CD14-positive monocyte (primary cell): ENCODE measurements at regions of chr18 and their contacts with region 1.

Region 1: DNA sequence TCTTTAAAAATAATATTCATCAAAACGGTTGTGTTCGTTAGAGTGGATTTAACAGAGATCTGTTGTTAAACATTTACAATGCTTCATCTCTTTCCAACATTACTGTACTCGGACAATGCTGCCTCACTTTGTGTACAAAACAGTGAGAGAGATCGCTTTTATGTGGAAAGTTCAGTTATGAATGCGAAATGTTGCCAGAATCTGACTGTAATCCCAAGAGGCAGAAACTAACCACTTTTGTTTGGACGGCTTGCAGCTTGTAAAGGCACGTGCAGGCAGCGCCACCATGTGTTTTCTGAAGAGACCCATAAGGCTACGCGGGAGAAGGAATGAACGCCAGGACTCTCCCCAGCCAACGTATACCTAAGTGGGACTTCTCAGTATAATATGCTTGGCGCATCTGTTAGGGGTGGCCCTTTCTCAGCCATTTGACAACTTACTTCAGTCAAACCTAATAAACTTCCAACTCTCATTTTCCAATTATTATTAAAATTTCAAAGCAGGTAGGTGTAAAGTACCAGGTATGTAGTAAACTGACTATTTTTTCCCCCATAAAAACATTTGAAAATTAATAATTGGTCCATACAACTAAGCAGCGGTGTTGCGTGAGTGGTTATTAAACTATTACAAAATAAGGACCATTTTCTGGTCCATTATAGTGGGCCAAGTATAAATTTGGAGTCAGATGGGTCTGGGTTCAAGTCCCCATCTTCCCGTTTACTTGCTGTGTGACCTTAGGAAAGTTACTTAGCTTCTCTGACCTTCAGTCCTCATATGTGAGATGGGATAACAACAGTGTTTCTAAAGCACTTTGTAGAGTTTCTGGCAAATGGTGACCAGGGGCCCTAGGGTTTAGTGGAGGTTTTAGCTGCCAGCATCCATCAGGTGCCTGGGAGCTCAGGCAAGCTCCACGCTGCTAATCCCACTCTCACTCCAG is 5.6 kb upstream of the NAPG start:
- DNase-seq: peak; percentile 70 to 81 (median 78)
- H3K4me3 ChIP-seq: no peak overlapping the region
- H3K4me3 Mint-ChIP-seq: no peak overlapping the region
- H3K27ac ChIP-seq: no peak overlapping the region
- H3K27ac Mint-ChIP-seq: peak overlapping the region in 6 of 7 donors; percentile 19 to 92 (median 46)
- H3K4me1 ChIP-seq: peaks cover 37 to 40% of the 10 kb centered on the region in 2 donors
- H3K4me1 Mint-ChIP-seq: peaks cover 42% of the 10 kb centered on the region
- H3K27me3 ChIP-seq: no peaks in the 10 kb centered on the region
- H3K27me3 Mint-ChIP-seq: peaks cover 0 to 2% (median 0%) of the 10 kb centered on the region in 3 donors
- CTCF ChIP-seq: peak; percentile 83

Region 2: GRCh38 chr18:9971313-9971920 is 548.9 kb before region 1 on chr18:
- intact Hi-C with region 1: loop called (anchors 2 to 5 kb)
- DNase-seq: peak; percentile 74 to 85 (median 75)
- H3K4me3 ChIP-seq: no peak overlapping the region
- H3K4me3 Mint-ChIP-seq: no peak overlapping the region
- H3K27ac ChIP-seq: no peak overlapping the region
- H3K27ac Mint-ChIP-seq: no peak overlapping the region
- H3K4me1 ChIP-seq: peaks cover 26 to 38% of the 10 kb centered on the region in 2 donors
- H3K4me1 Mint-ChIP-seq: peaks cover 45% of the 10 kb centered on the region
- H3K27me3 ChIP-seq: no peaks in the 10 kb centered on the region
- H3K27me3 Mint-ChIP-seq: peaks cover 10 to 16% (median 11%) of the 10 kb centered on the region in 3 donors
- CTCF ChIP-seq: peak; percentile 87

Region 3: GRCh38 chr18:10405816-10406663 is 114.2 kb before region 1 on chr18:
- intact Hi-C with region 1: loop called in 1 of 2 experiments (anchors 10 kb)
- DNase-seq: no peak
- H3K4me3 ChIP-seq: no peak overlapping the region
- H3K4me3 Mint-ChIP-seq: no peak overlapping the region
- H3K27ac ChIP-seq: no peak overlapping the region
- H3K27ac Mint-ChIP-seq: no peak overlapping the region
- H3K4me1 ChIP-seq: peaks cover 15 to 19% of the 10 kb centered on the region in 2 donors
- H3K4me1 Mint-ChIP-seq: peaks cover 14% of the 10 kb centered on the region
- H3K27me3 ChIP-seq: no peaks in the 10 kb centered on the region
- H3K27me3 Mint-ChIP-seq: peaks cover 2 to 6% (median 4%) of the 10 kb centered on the region in 3 donors
- CTCF ChIP-seq: no peak